ENCODE measurements at regions of chr12 and their contacts with region 1.

Region 1: GRCh38 chr12:71754461-71755145 is at the start of gene RAB21:
- DNase-seq: peak; percentile 97 to 99
- ATAC-seq: peak; percentile 86 to 98 (median 91)
- H3K4me3 ChIP-seq: peak within 1 kb of the TSS; percentile 89
- H3K4me3 Mint-ChIP-seq: peak within 1 kb of the TSS; percentile 93
- H3K27ac ChIP-seq: peak within 1 kb of the TSS; percentile 98
- H3K27ac Mint-ChIP-seq: peak within 1 kb of the TSS; percentile 92 to 96
- H3K4me1 ChIP-seq: peaks cover 17% of the 10 kb centered on the region
- H3K4me1 Mint-ChIP-seq: peaks cover 45 to 46% of the 10 kb centered on the region in 2 donors
- H3K27me3 ChIP-seq: peaks cover 6% of the 10 kb centered on the region
- H3K27me3 Mint-ChIP-seq: peaks cover 12 to 14% of the 10 kb centered on the region in 2 donors
- CTCF ChIP-seq: peak; percentile 22
- total RNA-seq, gene RAB21: 62.5 to 84.9 (median 68.7) TPM

Region 2: DNA sequence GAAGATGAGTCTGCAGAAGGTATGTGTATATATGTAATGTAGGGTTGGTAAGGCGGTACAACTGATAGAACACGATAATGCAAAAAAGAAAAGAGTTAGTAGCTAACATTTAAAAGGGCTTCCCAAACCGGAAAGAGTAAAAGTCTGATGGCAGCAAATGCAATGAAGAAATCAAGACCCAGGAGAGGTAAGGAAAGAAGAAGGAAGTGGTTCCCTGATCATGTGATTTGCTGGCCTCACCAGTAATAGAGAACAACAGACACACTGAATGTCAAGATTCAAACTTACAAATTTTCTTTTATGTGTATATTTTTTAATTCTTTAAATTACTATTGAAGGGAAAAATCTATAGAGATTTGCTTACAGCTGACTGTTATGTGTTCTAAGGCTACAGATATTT is 109.3 kb before region 1 on chr12:
- intact Hi-C with region 1: no loop called
- DNase-seq: no peak
- ATAC-seq: no peak
- H3K4me3 ChIP-seq: no peak overlapping the region
- H3K4me3 Mint-ChIP-seq: no peak overlapping the region
- H3K27ac ChIP-seq: no peak overlapping the region
- H3K27ac Mint-ChIP-seq: peak overlapping the region; percentile 25 to 37
- H3K4me1 ChIP-seq: no peaks in the 10 kb centered on the region
- H3K4me1 Mint-ChIP-seq: peaks cover 12 to 20% of the 10 kb centered on the region in 2 donors
- H3K27me3 ChIP-seq: no peaks in the 10 kb centered on the region
- H3K27me3 Mint-ChIP-seq: no peaks in the 10 kb centered on the region
- CTCF ChIP-seq: no peak

Region 3: DNA sequence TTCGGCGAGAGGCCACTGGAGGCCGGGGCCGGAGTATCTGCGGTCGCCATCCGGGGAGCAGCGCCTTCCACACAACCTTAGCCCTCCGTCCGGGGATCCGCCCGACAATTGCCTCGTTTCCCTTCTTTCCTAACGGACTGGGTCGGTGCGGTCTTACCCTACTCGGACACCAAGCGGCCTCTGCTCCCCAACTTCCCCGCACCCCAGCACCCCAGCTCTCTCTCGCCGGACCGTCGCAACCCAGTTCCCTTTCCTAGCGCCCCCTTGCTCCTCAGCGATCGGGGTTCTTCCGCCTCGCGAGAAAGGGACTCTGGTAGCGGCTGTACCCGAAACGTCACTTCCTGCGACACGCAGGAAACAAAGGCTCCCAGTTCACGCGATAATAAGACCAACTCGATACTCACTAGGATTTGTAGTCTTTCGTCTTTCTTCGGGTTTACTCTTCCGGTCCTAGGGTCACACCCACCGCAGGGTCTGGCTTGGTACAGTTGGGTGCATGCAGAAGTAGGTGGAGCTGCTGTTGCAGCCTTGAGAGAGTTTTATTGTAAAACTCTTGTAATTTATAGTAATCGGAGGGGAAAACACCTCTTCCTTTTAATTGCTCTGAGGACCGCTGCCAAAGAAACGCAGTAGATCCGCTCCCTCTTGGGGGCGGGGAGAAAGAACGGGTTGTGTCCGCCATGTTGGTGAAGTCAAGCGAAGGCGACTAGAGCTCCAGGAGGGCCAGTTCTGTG is 90.9 kb before region 1 on chr12 and contains the start of gene ZFC3H1:
- intact Hi-C with region 1: loop called (anchors 1 kb)
- DNase-seq: peak; percentile 86 to 98
- ATAC-seq: peak; percentile 72 to 89 (median 77)
- H3K4me3 ChIP-seq: peak within 1 kb of the TSS; percentile 92
- H3K4me3 Mint-ChIP-seq: peak within 1 kb of the TSS; percentile 100
- H3K27ac ChIP-seq: peak within 1 kb of the TSS; percentile 98
- H3K27ac Mint-ChIP-seq: peak within 1 kb of the TSS; percentile 100
- H3K4me1 ChIP-seq: peaks cover 10% of the 10 kb centered on the region
- H3K4me1 Mint-ChIP-seq: peaks cover 53 to 56% of the 10 kb centered on the region in 2 donors
- H3K27me3 ChIP-seq: no peaks in the 10 kb centered on the region
- H3K27me3 Mint-ChIP-seq: peaks cover 0 to 2% of the 10 kb centered on the region in 2 donors
- CTCF ChIP-seq: no peak
- total RNA-seq, gene ZFC3H1: 158 to 164 (median 164) TPM

Region 4: DNA sequence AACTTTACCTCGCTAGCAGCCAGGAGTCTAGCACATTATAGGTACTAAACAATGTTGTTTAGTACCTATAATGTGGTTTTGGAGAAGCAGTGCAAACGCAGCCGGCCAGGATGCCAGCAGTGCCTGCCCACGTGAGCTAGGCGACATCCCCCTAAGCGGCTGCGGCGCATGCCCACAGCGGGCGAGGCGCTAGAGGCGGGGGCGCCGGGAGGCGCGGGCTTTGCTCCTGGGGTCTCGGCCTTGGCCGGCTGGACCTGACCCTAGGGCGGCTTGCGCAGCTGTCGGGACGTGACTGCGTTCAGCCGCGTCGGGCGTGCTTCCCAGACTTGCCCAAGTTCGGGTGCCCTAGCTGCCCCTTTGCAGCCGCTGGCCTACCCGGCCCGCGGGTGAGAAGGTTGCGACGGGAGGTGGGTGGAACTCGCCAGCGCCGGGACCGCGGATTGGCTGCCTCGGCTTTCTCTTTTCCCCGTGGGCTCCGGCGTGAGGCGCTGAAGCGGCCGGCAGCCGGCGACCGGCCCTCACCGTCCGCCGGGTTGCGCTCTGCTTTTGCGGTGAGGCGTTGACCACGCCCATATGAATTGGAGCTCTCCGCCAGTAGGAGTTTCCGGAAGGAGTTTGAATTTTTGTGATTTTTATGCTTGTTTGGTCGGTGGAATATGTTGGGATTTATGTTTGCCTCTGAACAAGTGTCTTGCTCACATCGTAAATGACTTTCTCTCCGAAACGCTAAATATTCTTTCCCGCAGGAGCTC is 68.5 kb before region 1 on chr12 and contains the start of gene TMEM19:
- intact Hi-C with region 1: loop called (anchors 2 kb)
- DNase-seq: peak; percentile 78 to 91
- ATAC-seq: peak; percentile 89 to 94 (median 91)
- H3K4me3 ChIP-seq: peak within 1 kb of the TSS; percentile 90
- H3K4me3 Mint-ChIP-seq: peak within 1 kb of the TSS; percentile 97
- H3K27ac ChIP-seq: peak within 1 kb of the TSS; percentile 81
- H3K27ac Mint-ChIP-seq: peak within 1 kb of the TSS; percentile 94 to 96
- H3K4me1 ChIP-seq: peaks cover 17% of the 10 kb centered on the region
- H3K4me1 Mint-ChIP-seq: peaks cover 22 to 33% of the 10 kb centered on the region in 2 donors
- H3K27me3 ChIP-seq: no peaks in the 10 kb centered on the region
- H3K27me3 Mint-ChIP-seq: peaks cover 0 to 3% of the 10 kb centered on the region in 2 donors
- CTCF ChIP-seq: no peak
- total RNA-seq, gene TMEM19: 13.8 to 24.6 (median 18.9) TPM

Region 5: GRCh38 chr12:71838676-71839075 is 84.1 kb after region 1 on chr12:
- intact Hi-C with region 1: loop called (anchors 1 kb)
- DNase-seq: peak in 1 of 2 donors; percentile 14
- ATAC-seq: no peak
- H3K4me3 ChIP-seq: no peak overlapping the region
- H3K4me3 Mint-ChIP-seq: peak overlapping the region; percentile 96
- H3K27ac ChIP-seq: peak overlapping the region; percentile 99
- H3K27ac Mint-ChIP-seq: peak overlapping the region; percentile 97
- H3K4me1 ChIP-seq: peaks cover 13% of the 10 kb centered on the region
- H3K4me1 Mint-ChIP-seq: peaks cover 35 to 40% of the 10 kb centered on the region in 2 donors
- H3K27me3 ChIP-seq: peaks cover 5% of the 10 kb centered on the region
- H3K27me3 Mint-ChIP-seq: peaks cover 9 to 20% of the 10 kb centered on the region in 2 donors
- CTCF ChIP-seq: no peak

Region 6: GRCh38 chr12:71865166-71865713 is 110.6 kb after region 1 on chr12:
- intact Hi-C with region 1: no loop called
- DNase-seq: no peak
- ATAC-seq: peak; percentile 33 to 53 (median 35)
- H3K4me3 ChIP-seq: no peak overlapping the region
- H3K4me3 Mint-ChIP-seq: no peak overlapping the region
- H3K27ac ChIP-seq: no peak overlapping the region
- H3K27ac Mint-ChIP-seq: peak overlapping the region in 1 of 2 donors; percentile 66
- H3K4me1 ChIP-seq: peaks cover 24% of the 10 kb centered on the region
- H3K4me1 Mint-ChIP-seq: peaks cover 61 to 63% of the 10 kb centered on the region in 2 donors
- H3K27me3 ChIP-seq: no peaks in the 10 kb centered on the region
- H3K27me3 Mint-ChIP-seq: no peaks in the 10 kb centered on the region
- CTCF ChIP-seq: no peak